ENCODE measurements at regions of chrX and their contacts with region 1.

Region 1: DNA sequence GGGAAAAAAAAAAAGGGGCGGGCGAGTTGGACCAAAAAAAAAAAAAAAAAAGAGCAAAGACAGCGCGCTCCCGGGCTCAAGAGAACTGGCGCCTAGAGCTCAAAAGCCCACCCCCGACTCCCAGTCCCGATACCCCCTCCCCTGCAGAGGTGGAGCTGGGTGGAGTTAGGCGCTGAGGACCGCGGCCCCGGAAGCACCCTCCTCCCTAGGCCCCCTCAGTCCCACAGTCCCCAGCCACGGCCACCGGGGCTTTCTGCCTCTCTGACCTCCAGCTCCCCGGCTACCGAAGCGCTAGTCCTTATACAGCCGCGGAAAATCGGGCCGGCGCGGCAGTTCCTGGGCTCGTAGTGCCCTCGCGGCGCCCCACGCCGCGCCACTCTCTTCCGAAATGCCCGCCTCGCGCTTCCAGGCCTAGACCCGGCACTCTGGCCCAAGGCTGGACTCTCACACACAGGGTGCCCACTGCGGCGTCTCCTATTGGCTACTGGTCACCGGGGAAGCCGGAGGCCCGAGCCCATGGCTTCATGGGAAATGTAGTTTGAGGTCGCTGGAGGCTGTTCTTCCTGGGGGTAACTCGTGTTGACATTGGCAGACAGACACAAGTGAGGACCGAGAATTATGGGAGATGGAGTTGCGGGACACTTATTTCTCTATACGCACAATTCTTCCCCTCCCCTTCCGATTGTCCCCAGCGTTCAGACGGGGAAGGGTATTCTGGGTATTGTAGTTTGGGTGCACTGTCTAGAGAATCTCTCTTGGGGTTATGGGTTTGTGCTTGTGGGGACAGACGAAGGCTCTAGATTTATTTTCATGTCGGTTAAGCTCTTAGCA is at the start of gene ENOX2:
- H3K4me3 Mint-ChIP-seq: no peak within 1 kb of the TSS
- H3K27ac Mint-ChIP-seq: no peak within 1 kb of the TSS
- H3K4me1 Mint-ChIP-seq: peaks cover 15% of the 10 kb centered on the region
- H3K27me3 Mint-ChIP-seq: peaks cover 3% of the 10 kb centered on the region

Region 2: GRCh38 chrX:129982274-129983251 is 920.4 kb before region 1 on chrX and contains the start of gene BCORL1:
- intact Hi-C with region 1: loop called (anchors 5 kb)
- H3K4me3 Mint-ChIP-seq: no peak within 1 kb of the TSS
- H3K27ac Mint-ChIP-seq: no peak within 1 kb of the TSS
- H3K4me1 Mint-ChIP-seq: peaks cover 30% of the 10 kb centered on the region
- H3K27me3 Mint-ChIP-seq: peaks cover 3% of the 10 kb centered on the region

Region 3: DNA sequence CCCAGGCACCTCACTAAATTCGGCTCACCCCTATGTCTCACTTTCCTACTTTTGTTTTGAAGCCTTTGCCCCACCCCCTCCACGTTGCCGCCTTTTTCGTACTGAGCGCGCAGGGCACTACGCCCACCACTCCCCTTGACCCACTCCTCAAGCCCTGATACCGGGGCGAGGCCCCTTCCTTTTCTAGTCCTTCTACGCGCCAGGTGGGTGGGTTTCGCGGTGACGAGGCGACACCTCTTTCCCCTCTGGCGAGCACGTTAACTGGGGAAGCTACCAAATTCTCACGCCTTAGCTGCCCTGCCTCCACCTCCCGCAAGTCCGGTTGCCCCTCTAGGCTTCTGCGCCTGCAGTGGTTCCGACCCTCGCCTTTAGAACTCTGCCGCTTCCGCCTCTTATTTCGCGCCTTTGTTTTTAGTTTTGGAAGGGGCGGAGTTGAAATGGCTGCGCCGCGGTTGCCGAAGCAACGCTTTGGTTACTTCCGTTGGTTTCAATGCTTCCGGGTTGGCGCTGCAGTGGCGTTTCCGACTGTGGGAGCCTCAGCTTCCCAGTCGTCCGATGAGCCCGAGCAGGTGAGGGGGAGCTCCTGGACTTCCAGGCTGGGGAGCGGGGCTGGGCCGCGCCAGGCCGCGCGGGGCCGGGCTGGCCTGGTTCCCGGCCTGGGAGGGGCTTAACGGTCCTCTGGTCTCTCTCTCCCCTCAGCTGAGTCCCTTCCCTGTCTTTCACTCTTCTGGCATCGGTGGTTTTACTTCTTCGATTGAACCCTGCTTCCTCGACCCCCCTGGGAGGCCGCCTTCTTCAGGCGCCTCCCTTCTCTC is 563.4 kb before region 1 on chrX and contains the start of gene SLC25A14:
- intact Hi-C with region 1: loop called (anchors 5 kb)
- H3K4me3 Mint-ChIP-seq: peak within 1 kb of the TSS; percentile 96
- H3K27ac Mint-ChIP-seq: peak within 1 kb of the TSS; percentile 83
- H3K4me1 Mint-ChIP-seq: peaks cover 20% of the 10 kb centered on the region
- H3K27me3 Mint-ChIP-seq: no peaks in the 10 kb centered on the region

Region 4: GRCh38 chrX:130401415-130402207 is 501.4 kb before region 1 on chrX and contains the start of gene RBMX2:
- intact Hi-C with region 1: loop called (anchors 5 kb)
- H3K4me3 Mint-ChIP-seq: peak within 1 kb of the TSS; percentile 98
- H3K27ac Mint-ChIP-seq: peak within 1 kb of the TSS; percentile 92
- H3K4me1 Mint-ChIP-seq: peaks cover 10% of the 10 kb centered on the region
- H3K27me3 Mint-ChIP-seq: peaks cover 18% of the 10 kb centered on the region

Region 5: DNA sequence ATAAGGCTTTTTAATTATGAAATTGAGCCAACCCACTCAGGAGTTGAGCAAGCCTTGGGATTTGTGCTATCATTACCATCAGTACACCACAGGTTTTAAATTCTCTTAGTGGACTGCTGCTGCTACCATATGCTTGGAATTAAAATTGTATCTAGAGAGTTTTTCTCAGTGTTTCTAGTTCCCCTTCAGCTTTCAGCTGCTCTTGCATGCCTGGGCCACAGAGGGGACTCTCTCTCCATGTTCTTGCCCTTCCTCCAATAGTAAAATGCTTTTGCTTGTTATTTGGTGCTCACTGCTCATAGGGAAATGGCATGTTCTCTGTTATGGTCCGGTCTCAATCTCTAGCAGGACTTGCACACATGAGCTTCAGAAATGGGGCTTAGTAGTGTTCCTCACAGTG is 284.2 kb after region 1 on chrX:
- intact Hi-C with region 1: no loop called
- H3K4me3 Mint-ChIP-seq: no peak overlapping the region
- H3K27ac Mint-ChIP-seq: no peak overlapping the region
- H3K4me1 Mint-ChIP-seq: no peaks in the 10 kb centered on the region
- H3K27me3 Mint-ChIP-seq: no peaks in the 10 kb centered on the region